ENCODE measurements at regions of chr9 and their contacts with region 1.

Region 1: DNA sequence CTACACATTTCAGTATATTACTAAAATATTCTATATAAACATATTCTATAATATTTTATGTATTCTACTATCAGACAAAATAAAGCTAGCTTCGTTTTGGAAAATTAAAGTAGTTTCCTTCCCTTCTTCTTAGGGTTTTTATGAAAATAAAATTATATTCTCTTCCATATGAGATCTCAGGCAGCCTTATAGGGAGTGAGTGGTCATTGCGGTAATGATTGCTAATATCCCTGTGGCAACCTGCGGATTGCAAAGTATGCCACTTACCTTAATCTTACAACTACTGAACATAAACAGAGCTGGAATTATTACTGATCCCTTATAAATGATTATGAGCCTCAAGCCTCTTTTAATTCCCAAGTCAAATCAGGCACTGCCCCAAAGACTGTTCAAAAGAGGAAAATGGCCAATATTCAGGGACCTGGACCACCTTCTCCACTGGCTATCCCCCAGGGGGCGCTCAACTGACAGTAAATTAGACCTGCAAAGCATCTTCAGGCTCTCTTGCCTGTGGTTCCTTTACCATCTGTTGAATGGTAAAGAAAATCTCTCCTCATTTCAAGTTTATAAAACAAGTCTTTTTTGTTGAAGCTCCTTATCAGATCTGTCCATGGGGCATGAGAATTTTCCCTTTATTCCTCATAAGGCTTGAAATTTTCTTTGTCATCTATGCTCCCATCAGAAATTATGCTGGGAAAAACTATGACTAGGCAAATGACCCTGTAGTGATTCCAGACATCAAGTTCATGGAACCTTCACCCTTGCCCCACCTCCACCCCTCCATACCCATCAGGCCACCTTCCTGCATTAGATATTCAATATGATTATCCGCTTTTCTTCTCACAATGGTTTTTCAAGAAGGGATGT is 163.9 kb downstream of the CEMIP2 start:
- DNase-seq: peak; percentile 75
- ATAC-seq: peak; percentile 68
- H3K4me3 ChIP-seq: no peak overlapping the region
- H3K4me3 Mint-ChIP-seq: no peak overlapping the region
- H3K27ac ChIP-seq: no peak overlapping the region
- H3K27ac Mint-ChIP-seq: no peak overlapping the region
- H3K4me1 ChIP-seq: no peaks in the 10 kb centered on the region
- H3K4me1 Mint-ChIP-seq: no peaks in the 10 kb centered on the region
- H3K27me3 ChIP-seq: no peaks in the 10 kb centered on the region
- H3K27me3 Mint-ChIP-seq: no peaks in the 10 kb centered on the region
- CTCF ChIP-seq: peak; percentile 95

Region 2: DNA sequence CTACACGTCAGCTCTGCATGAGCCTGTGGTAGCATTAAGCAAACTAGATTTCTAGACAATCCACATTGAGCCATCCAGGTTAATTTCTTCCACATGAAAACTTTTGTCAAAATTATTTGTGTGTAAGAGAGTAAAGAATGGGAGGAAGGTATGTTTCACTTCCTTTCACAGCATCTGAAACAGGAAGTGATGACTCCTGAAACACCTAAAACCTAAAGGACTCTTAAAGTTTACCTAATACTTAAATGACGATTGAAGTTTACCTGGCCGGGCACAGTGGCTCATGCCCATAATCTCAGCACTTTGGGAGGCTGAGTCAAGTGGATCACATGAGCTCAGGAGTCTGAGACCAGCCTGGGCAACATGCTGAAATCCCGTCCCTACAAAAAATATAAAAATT is 60.0 kb before region 1 on chr9:
- CTCF ChIA-PET with region 1: no interaction called
- POLR2A ChIA-PET with region 1: no interaction called
- intact Hi-C with region 1: no loop called
- DNase-seq: peak; percentile 44
- ATAC-seq: no peak
- H3K4me3 ChIP-seq: no peak overlapping the region
- H3K4me3 Mint-ChIP-seq: no peak overlapping the region
- H3K27ac ChIP-seq: no peak overlapping the region
- H3K27ac Mint-ChIP-seq: no peak overlapping the region
- H3K4me1 ChIP-seq: peaks cover 21 to 22% of the 10 kb centered on the region in 2 donors
- H3K4me1 Mint-ChIP-seq: peaks cover 26% of the 10 kb centered on the region
- H3K27me3 ChIP-seq: peaks cover 0 to 3% (median 0%) of the 10 kb centered on the region in 4 experiments
- H3K27me3 Mint-ChIP-seq: peaks cover 10% of the 10 kb centered on the region
- CTCF ChIP-seq: no peak

Region 3: DNA sequence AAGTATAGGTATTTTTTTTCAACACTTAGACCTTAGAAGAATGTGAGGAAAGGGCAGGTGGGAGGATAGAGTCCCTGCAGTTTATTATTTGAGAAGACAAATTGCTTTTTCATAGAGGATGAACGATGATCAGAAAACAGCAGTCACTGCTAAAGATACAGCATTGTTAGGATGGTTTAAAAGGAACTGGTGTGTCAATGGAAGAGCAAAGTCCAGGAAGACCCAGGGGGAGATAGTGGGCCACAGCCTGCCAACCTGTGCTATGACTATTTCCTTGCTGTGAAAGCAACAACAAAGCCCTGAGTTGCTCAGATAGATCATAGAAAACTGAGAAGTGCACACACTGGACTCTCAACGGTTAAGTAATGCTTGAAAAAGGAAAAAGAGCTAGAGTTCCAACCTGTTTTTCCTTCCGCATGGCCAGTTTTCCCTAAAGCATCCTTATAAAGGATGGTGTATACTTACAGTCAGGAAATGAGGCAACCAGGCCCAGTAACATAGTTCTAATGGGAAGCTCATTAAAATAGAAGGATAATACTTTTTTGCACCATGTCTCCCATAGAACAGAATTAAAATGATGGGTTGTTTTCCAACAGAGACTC is 10.1 kb after region 1 on chr9:
- CTCF ChIA-PET with region 1: interaction called, 13 read pairs
- POLR2A ChIA-PET with region 1: no interaction called
- intact Hi-C with region 1: no loop called
- DNase-seq: no peak
- ATAC-seq: no peak
- H3K4me3 ChIP-seq: no peak overlapping the region
- H3K4me3 Mint-ChIP-seq: no peak overlapping the region
- H3K27ac ChIP-seq: no peak overlapping the region
- H3K27ac Mint-ChIP-seq: no peak overlapping the region
- H3K4me1 ChIP-seq: no peaks in the 10 kb centered on the region
- H3K4me1 Mint-ChIP-seq: no peaks in the 10 kb centered on the region
- H3K27me3 ChIP-seq: no peaks in the 10 kb centered on the region
- H3K27me3 Mint-ChIP-seq: no peaks in the 10 kb centered on the region
- CTCF ChIP-seq: no peak

Region 4: GRCh38 chr9:71638627-71639026 is 34.2 kb after region 1 on chr9:
- CTCF ChIA-PET with region 1: no interaction called
- POLR2A ChIA-PET with region 1: no interaction called
- intact Hi-C with region 1: no loop called
- DNase-seq: peak; percentile 38
- ATAC-seq: peak; percentile 36
- H3K4me3 ChIP-seq: peak overlapping the region in 2 of 5 experiments; percentile 29 to 38
- H3K4me3 Mint-ChIP-seq: peak overlapping the region; percentile 84
- H3K27ac ChIP-seq: peak overlapping the region in 1 of 2 donors; percentile 0
- H3K27ac Mint-ChIP-seq: peak overlapping the region; percentile 70
- H3K4me1 ChIP-seq: peaks cover 22 to 23% of the 10 kb centered on the region in 2 donors
- H3K4me1 Mint-ChIP-seq: peaks cover 28% of the 10 kb centered on the region
- H3K27me3 ChIP-seq: no peaks in the 10 kb centered on the region
- H3K27me3 Mint-ChIP-seq: no peaks in the 10 kb centered on the region
- CTCF ChIP-seq: no peak

Region 5: DNA sequence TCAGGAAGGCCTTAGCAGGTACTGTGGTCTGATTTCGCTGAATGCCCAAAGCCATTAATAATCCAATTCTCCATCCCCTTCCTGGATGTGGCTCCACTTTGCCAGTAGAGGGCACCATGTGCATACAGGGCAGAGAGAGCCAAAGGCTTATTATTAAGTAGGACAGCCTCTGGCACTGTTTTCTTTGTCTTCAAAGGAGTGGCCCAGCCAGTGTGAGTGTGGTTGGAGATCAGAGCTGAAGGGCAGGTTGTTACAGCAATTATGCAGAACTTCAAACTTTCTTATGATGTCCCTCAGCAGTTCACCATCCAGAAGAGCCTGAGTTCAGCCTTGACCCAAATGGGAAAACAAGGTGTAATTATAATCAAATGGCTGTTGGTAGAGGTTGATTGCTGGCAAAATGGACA is 202.5 kb after region 1 on chr9:
- CTCF ChIA-PET with region 1: interaction called, 12 read pairs
- POLR2A ChIA-PET with region 1: no interaction called
- intact Hi-C with region 1: no loop called
- DNase-seq: peak; percentile 74
- ATAC-seq: peak; percentile 88
- H3K4me3 ChIP-seq: no peak overlapping the region
- H3K4me3 Mint-ChIP-seq: no peak overlapping the region
- H3K27ac ChIP-seq: no peak overlapping the region
- H3K27ac Mint-ChIP-seq: peak overlapping the region; percentile 2
- H3K4me1 ChIP-seq: peaks cover 14 to 16% of the 10 kb centered on the region in 2 donors
- H3K4me1 Mint-ChIP-seq: peaks cover 24% of the 10 kb centered on the region
- H3K27me3 ChIP-seq: no peaks in the 10 kb centered on the region
- H3K27me3 Mint-ChIP-seq: no peaks in the 10 kb centered on the region
- CTCF ChIP-seq: peak; percentile 89

Region 6: GRCh38 chr9:72022841-72023240 is 418.4 kb after region 1 on chr9:
- CTCF ChIA-PET with region 1: interaction called, 61 read pairs
- POLR2A ChIA-PET with region 1: no interaction called
- intact Hi-C with region 1: no loop called
- DNase-seq: no peak
- ATAC-seq: no peak
- H3K4me3 ChIP-seq: no peak overlapping the region
- H3K4me3 Mint-ChIP-seq: no peak overlapping the region
- H3K27ac ChIP-seq: no peak overlapping the region
- H3K27ac Mint-ChIP-seq: no peak overlapping the region
- H3K4me1 ChIP-seq: peaks cover 0 to 4% of the 10 kb centered on the region in 2 donors
- H3K4me1 Mint-ChIP-seq: peaks cover 5% of the 10 kb centered on the region
- H3K27me3 ChIP-seq: peaks cover 0 to 1% (median 0%) of the 10 kb centered on the region in 4 experiments
- H3K27me3 Mint-ChIP-seq: peaks cover 7% of the 10 kb centered on the region
- CTCF ChIP-seq: no peak

Region 7: GRCh38 chr9:72271613-72272478 is 667.4 kb after region 1 on chr9:
- CTCF ChIA-PET with region 1: interaction called, 4 read pairs
- POLR2A ChIA-PET with region 1: no interaction called
- intact Hi-C with region 1: loop called (anchors 1 kb)
- DNase-seq: peak; percentile 63
- ATAC-seq: peak; percentile 56
- H3K4me3 ChIP-seq: no peak overlapping the region
- H3K4me3 Mint-ChIP-seq: no peak overlapping the region
- H3K27ac ChIP-seq: no peak overlapping the region
- H3K27ac Mint-ChIP-seq: no peak overlapping the region
- H3K4me1 ChIP-seq: no peaks in the 10 kb centered on the region
- H3K4me1 Mint-ChIP-seq: no peaks in the 10 kb centered on the region
- H3K27me3 ChIP-seq: no peaks in the 10 kb centered on the region
- H3K27me3 Mint-ChIP-seq: peaks cover 20% of the 10 kb centered on the region
- CTCF ChIP-seq: peak; percentile 99